Ovary (tissue), 10 donors: ENCODE measurements at regions of chr7 and their contacts with region 1.

Region 1: DNA sequence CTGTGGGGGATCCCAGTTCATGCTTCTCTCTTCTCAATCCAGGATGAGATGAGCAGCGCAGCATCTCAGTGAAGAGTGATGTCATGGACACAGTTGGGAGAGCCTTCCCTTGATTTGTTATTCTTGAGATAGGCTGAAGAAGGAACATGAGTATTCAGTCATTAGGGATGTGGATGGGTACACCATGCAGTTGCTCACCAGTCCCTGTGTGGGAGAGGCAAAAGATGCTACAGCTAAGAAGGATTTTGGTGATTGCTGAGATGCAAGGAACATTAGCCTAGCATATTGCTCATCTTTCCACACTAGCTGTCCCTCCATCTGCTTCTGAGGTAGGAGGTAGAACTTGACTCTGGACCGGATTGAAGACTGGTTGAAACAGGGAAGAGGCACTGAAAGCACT is 179.6 kb downstream of the GALNT17 start:
- DNase-seq: no peak
- H3K4me3 ChIP-seq: no peak overlapping the region
- H3K27ac ChIP-seq: no peak overlapping the region
- H3K4me1 ChIP-seq: peaks cover 8% of the 10 kb centered on the region
- H3K27me3 ChIP-seq: no peaks in the 10 kb centered on the region
- CTCF ChIP-seq: no peak
- EP300 ChIP-seq: no peak
- POLR2A ChIP-seq: no peak

Region 2: DNA sequence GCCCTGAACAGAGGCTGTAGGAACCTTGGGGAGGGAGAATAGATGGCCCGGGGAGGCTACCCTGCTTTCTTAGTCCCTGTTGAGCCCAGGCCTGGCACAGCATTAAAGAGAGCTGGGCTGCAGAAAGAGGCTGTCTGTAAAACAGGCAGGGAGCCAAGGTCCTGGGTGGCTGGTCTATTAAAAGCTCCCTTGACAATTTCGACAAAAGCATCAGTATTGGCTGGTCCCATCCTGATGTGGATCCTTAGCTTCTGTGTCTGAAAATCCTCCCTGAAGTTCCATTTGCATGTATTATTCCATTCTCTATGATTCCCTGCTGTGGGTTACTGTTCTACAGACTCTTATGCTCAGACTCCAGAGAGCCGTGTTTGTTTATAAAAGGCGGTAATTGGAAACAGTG is 21.1 kb before region 1 on chr7:
- intact Hi-C with region 1: loop called in 1 of 4 experiments (anchors 2 kb)
- DNase-seq: no peak
- H3K4me3 ChIP-seq: no peak overlapping the region
- H3K27ac ChIP-seq: no peak overlapping the region
- H3K4me1 ChIP-seq: peaks cover 5% of the 10 kb centered on the region
- H3K27me3 ChIP-seq: no peaks in the 10 kb centered on the region
- CTCF ChIP-seq: no peak
- EP300 ChIP-seq: no peak
- POLR2A ChIP-seq: no peak